Common myeloid progenitor, CD34-positive (primary cell): ENCODE measurements at regions of chr22 and their contacts with region 1.

Region 1: GRCh38 chr22:36180038-36180880 is 19.7 kb upstream of the APOL3 start:
- DNase-seq: peak; percentile 75 to 86 (median 81)
- H3K4me3 ChIP-seq: no peak overlapping the region
- H3K27ac ChIP-seq: no peak overlapping the region
- H3K4me1 ChIP-seq: peaks cover 0 to 2% (median 0%) of the 10 kb centered on the region in 4 experiments
- H3K27me3 ChIP-seq: no peaks in the 10 kb centered on the region

Region 2: DNA sequence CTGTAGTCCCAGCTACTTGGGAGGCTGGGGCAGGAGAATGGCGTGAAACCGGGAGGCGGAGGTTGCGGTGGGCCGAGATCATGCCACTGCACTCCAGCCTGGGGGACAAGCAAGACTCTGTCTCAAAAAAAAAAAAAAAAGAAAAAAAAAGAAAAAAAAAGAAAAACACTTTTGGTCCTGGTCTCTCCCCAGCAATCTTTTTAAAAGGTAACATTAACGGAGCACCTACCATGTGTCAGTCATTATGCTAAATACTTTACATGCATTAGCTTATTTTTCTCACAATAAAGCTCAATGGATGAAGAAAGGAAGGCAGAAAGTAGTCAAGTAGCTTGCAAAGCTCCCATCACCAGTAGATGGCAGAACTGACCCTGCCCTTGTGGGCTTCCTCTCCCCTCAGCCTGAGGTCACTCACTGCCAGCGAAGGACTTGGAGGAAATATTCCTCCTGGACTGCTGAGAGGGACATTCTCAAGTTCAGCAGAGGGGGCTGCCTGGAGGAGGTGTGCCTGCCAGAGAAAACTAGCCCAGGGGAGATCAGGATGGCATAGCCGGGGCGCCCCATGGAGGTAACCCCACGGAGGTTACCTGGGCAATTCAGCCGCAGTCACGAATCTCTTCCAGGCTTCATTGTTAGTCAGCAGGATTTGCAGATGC is 35.2 kb before region 1 on chr22:
- CTCF ChIA-PET with region 1: interaction called, 171 read pairs
- POLR2A ChIA-PET with region 1: interaction called, 10 read pairs
- DNase-seq: peak; percentile 38 to 64 (median 59)
- H3K4me3 ChIP-seq: no peak overlapping the region
- H3K27ac ChIP-seq: no peak overlapping the region
- H3K4me1 ChIP-seq: peaks cover 0 to 7% (median 3%) of the 10 kb centered on the region in 4 experiments
- H3K27me3 ChIP-seq: no peaks in the 10 kb centered on the region

Region 3: DNA sequence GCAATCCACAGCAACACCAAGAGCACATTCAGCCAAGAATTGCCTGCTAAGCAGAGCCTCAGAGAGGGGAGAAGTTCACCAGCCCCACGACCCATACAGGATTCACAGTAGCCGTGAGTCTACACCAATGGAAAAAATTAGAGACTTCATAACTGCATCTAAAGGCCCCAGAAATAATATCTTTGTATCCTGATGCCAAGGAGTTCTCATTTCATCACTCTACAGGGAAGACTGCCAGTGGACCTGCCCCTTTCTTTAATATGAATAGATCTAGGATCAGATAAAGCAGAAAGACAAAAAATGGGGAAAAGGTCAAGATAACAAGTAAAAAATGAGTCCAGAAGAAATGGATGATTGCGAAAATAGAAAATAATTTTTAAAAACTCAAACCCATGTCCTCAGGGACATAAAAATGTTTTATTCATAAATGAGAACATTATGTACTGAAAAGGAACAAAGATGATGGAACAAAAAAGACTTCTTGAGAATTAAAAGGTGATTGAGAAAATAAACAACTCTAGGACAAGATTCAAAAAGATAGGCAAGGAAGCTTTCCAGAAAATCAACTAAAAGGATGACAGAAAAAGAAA is 29.2 kb before region 1 on chr22:
- CTCF ChIA-PET with region 1: interaction called, 171 read pairs
- POLR2A ChIA-PET with region 1: interaction called, 8 read pairs
- DNase-seq: no peak
- H3K4me3 ChIP-seq: no peak overlapping the region
- H3K27ac ChIP-seq: no peak overlapping the region
- H3K4me1 ChIP-seq: peaks cover 3 to 33% (median 27%) of the 10 kb centered on the region in 4 experiments
- H3K27me3 ChIP-seq: no peaks in the 10 kb centered on the region

Region 4: DNA sequence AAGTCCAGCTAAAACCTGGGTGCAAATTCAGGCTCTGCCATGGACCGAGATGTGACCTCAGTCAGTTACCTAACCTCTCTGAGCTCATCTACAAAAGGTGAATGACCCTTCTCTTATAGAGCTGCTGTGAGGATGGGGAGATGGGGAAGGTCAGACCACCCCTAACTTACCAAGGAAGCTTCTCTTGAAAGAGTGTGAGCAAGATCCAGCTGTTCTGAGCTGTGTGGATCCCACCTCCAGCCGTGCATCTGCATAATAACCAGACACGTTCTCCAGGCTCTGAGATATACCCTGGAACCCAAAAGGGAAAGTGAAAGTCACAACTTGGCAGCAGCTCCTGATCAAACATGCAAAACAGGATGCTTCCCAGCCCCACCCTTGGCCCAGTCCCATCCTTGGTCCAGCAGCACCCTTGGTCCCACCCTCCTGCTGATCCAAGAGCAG is 19.7 kb before region 1 on chr22 and contains the start of gene APOL3:
- CTCF ChIA-PET with region 1: interaction called, 48 read pairs
- POLR2A ChIA-PET with region 1: no interaction called
- DNase-seq: peak; percentile 60 to 81 (median 77)
- H3K4me3 ChIP-seq: peak within 1 kb of the TSS; percentile 34 to 75 (median 59)
- H3K27ac ChIP-seq: peak within 1 kb of the TSS; percentile 69 to 95
- H3K4me1 ChIP-seq: peaks cover 13 to 72% (median 62%) of the 10 kb centered on the region in 4 experiments
- H3K27me3 ChIP-seq: no peaks in the 10 kb centered on the region